ENCODE measurements at regions of chr1 and their contacts with region 1.

Region 1: DNA sequence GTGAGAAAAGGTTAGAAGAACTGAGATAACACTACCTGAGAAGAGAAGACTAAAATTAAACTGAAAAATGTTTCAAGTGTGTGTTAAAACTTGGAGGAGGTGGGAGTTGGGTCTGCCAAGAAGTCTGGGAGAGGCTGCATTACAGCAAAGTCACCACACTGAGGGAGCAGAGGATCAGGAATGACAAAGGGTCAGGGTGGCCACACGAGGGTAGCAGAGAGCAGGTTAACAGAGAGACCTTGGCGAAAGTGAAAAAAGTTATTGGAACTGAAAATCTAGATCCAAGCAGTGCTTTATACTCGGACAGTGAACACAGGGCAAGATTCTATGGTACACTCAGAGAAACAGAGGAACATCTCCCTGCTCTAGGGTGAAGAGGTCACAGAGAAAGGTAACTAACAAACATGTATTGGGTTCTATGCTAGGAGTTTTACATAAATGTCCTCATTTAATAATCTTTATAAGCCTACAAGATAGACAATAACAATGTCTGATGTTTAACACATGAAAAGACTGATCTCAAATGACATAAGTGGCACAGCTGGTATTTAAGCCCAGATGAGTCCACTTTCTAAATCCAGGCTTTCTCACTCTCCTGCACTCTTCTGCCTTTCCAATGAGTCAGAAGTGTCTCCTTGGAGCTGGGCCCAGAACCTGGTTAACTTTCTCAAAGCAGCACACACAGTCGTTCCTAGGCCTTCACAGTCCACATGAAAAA is 10.3 kb upstream of the CADM3 start:
- DNase-seq: peak; percentile 74
- ATAC-seq: peak; percentile 97 to 99

Region 2: DNA sequence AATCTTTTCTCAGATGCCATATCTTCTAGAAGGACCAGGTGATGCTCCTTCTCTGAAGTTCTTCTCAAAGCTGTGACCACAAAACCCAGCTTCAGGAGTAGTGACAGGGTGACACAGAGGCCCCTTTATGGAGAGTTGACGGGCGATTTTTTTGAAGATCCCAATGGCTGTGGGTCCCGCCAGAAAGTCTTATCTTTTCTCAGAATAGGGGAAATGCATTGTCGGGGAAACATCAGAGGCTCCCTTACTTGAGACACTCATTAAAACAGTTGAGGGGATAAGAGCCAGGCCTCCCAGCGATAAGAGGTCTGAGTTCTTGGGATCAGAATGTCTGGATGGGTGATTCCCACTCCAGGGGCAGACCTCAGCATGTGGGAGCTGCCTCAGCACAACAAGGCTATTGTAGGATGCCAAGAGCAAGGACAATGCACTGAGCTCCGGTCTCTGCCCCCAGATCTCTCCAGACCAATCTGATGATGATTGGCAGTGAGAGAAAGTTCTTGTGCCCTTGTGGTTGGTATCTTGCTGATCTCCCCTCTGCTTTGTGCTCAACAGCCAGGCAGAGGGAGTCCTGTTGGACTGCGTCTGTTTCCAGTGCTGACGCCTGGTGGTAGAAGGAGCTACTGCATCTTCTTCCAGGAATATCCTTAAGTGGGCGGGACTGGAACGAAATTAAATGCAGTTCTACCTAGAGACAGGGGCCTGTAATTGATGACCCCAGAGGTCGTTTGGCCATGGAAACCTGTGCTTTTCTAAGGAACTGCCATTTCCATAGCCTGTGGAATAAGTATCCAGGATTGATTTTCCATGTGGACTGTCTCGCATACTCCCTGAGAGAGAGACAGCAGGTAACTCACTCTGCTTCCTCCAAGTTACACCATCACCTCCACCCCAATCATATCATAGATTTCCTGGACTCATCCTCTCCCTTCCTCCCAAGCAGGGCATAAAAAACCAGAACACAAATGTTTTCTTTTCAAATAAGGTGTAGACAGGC is 36.7 kb after region 1 on chr1:
- intact Hi-C with region 1: loop called in 1 of 2 experiments (anchors 5 kb)
- DNase-seq: peak; percentile 71
- ATAC-seq: peak; percentile 61 to 83

Region 3: GRCh38 chr1:159214149-159214760 is 53.1 kb after region 1 on chr1:
- intact Hi-C with region 1: loop called (anchors 2 to 5 kb)
- DNase-seq: peak; percentile 36
- ATAC-seq: peak in 1 of 2 donors; percentile 61

Region 4: GRCh38 chr1:159247266-159247665 is 86.1 kb after region 1 on chr1:
- intact Hi-C with region 1: no loop called
- DNase-seq: no peak
- ATAC-seq: no peak

Measured in left cardiac atrium (tissue), 4 donors.